Activated B cell treated with CpG ODN at 0.5 μM for 24 hours (primary cell): ENCODE measurements at regions of chr6 and their contacts with region 1.

Region 1: GRCh38 chr6:1381481-1382330 is 7.7 kb upstream of the FOXF2 start:
- DNase-seq: peak; percentile 64
- ATAC-seq: peak; percentile 57
- H3K4me3 Mint-ChIP-seq: peak overlapping the region; percentile 32
- H3K27ac Mint-ChIP-seq: no peak overlapping the region
- H3K4me1 Mint-ChIP-seq: peaks cover 38% of the 10 kb centered on the region
- H3K27me3 Mint-ChIP-seq: peaks cover 55% of the 10 kb centered on the region
- CTCF ChIP-seq: no peak

Region 2: GRCh38 chr6:722077-722524 is 659.6 kb before region 1 on chr6:
- CTCF ChIA-PET with region 1: interaction called, 7 read pairs
- POLR2A ChIA-PET with region 1: no interaction called
- intact Hi-C with region 1: loop called (anchors 5 kb)
- DNase-seq: peak; percentile 40
- ATAC-seq: peak; percentile 50
- H3K4me3 Mint-ChIP-seq: no peak overlapping the region
- H3K27ac Mint-ChIP-seq: no peak overlapping the region
- H3K4me1 Mint-ChIP-seq: peaks cover 4% of the 10 kb centered on the region
- H3K27me3 Mint-ChIP-seq: peaks cover 12% of the 10 kb centered on the region
- CTCF ChIP-seq: peak; percentile 86

Region 3: GRCh38 chr6:797479-798077 is 584.1 kb before region 1 on chr6:
- CTCF ChIA-PET with region 1: interaction called, 8 read pairs
- POLR2A ChIA-PET with region 1: no interaction called
- intact Hi-C with region 1: loop called (anchors 1 kb)
- DNase-seq: no peak
- ATAC-seq: peak; percentile 50
- H3K4me3 Mint-ChIP-seq: no peak overlapping the region
- H3K27ac Mint-ChIP-seq: no peak overlapping the region
- H3K4me1 Mint-ChIP-seq: peaks cover 13% of the 10 kb centered on the region
- H3K27me3 Mint-ChIP-seq: peaks cover 23% of the 10 kb centered on the region
- CTCF ChIP-seq: peak; percentile 91

Region 4: GRCh38 chr6:1222728-1223595 is 158.7 kb before region 1 on chr6:
- CTCF ChIA-PET with region 1: no interaction called
- POLR2A ChIA-PET with region 1: no interaction called
- intact Hi-C with region 1: no loop called
- DNase-seq: no peak
- ATAC-seq: no peak
- H3K4me3 Mint-ChIP-seq: no peak overlapping the region
- H3K27ac Mint-ChIP-seq: no peak overlapping the region
- H3K4me1 Mint-ChIP-seq: no peaks in the 10 kb centered on the region
- H3K27me3 Mint-ChIP-seq: peaks cover 3% of the 10 kb centered on the region
- CTCF ChIP-seq: no peak

Region 5: DNA sequence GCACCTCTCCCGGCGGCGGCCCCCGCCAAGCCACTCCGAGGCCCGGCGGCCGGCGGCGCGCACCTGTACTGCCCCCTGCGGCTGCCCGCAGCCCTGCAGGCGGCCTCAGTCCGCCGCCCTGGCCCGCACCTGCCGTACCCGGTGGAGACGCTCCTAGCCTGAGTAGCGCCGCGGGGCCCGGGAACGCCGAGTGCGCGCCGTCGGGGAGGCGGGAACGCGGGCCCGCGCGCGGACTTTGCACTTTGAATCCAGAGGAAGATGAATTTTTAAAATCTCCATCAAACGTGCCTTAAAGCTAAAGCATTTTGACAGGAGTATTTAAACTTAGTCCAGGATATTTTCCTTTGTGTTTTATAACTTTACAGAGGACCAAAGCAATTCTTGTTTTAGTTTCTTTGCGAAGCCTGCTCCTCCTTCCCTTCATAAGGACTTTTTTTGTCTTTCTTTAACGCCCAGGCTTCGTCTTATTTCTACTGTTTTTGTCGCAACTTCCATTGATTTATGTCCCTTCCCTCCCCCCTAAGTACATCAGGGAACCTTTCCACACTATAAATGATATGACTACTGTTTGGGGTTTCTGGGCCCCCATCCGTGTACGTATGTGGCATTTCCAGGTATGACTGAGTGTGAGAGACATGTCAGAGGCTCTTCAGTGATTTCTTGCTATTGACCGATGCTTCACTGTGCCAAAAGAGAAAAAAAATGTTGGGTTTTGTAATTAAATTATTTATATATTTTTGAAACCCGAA is 67.8 kb before region 1 on chr6:
- CTCF ChIA-PET with region 1: no interaction called
- POLR2A ChIA-PET with region 1: no interaction called
- intact Hi-C with region 1: loop called (anchors 2 kb)
- DNase-seq: no peak
- ATAC-seq: no peak
- H3K4me3 Mint-ChIP-seq: peak overlapping the region; percentile 33
- H3K27ac Mint-ChIP-seq: peak overlapping the region; percentile 54
- H3K4me1 Mint-ChIP-seq: peaks cover 28% of the 10 kb centered on the region
- H3K27me3 Mint-ChIP-seq: peaks cover 55% of the 10 kb centered on the region
- CTCF ChIP-seq: no peak

Region 6: GRCh38 chr6:1396952-1397868 is 15.5 kb after region 1 on chr6:
- CTCF ChIA-PET with region 1: interaction called, 10 read pairs
- POLR2A ChIA-PET with region 1: no interaction called
- intact Hi-C with region 1: loop called (anchors 2 kb)
- DNase-seq: peak; percentile 67
- ATAC-seq: peak; percentile 58
- H3K4me3 Mint-ChIP-seq: no peak overlapping the region
- H3K27ac Mint-ChIP-seq: no peak overlapping the region
- H3K4me1 Mint-ChIP-seq: peaks cover 8% of the 10 kb centered on the region
- H3K27me3 Mint-ChIP-seq: peaks cover 48% of the 10 kb centered on the region
- CTCF ChIP-seq: peak; percentile 90

Region 7: DNA sequence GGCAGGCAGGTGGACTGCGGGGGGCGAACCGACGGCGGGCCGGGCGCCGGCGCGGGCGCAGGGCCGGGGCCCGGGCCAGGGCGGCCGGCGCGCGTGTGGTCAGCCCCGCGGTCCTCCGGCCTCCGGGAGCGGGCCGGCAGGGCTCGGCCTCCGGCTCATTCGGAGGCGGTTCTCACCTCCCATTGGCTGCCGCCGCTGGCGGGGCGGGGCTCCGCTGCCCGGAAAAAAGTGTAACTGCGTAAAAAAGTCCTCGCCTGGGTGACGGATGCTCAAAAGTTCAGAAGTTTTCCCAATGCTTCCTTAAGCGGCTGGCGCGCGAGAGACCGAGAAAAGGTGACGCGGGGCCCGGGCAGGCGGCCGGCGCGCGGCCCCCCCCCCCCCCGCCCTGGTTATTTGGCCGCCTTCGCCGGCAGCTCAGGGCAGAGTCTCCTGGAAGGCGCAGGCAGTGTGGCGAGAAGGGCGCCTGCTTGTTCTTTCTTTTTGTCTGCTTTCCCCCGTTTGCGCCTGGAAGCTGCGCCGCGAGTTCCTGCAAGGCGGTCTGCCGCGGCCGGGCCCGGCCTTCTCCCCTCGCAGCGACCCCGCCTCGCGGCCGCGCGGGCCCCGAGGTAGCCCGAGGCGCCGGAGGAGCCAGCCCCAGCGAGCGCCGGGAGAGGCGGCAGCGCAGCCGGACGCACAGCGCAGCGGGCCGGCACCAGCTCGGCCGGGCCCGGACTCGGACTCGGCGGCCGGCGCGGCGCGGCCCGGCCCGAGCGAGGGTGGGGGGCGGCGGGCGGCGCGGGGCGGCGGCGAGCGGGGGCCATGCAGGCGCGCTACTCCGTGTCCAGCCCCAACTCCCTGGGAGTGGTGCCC is 228.2 kb after region 1 on chr6 and contains the start of gene FOXC1:
- CTCF ChIA-PET with region 1: no interaction called
- POLR2A ChIA-PET with region 1: no interaction called
- intact Hi-C with region 1: loop called (anchors 2 kb)
- DNase-seq: peak; percentile 57
- ATAC-seq: peak; percentile 43
- H3K4me3 Mint-ChIP-seq: peak within 1 kb of the TSS; percentile 78
- H3K27ac Mint-ChIP-seq: peak within 1 kb of the TSS; percentile 35
- H3K4me1 Mint-ChIP-seq: peaks cover 43% of the 10 kb centered on the region
- H3K27me3 Mint-ChIP-seq: peaks cover 57% of the 10 kb centered on the region
- CTCF ChIP-seq: no peak
- total RNA-seq, gene FOXC1: 1.00 and 1.1 TPM in 2 replicates